ENCODE measurements at regions of chr1 and their contacts with region 1.

Region 1: DNA sequence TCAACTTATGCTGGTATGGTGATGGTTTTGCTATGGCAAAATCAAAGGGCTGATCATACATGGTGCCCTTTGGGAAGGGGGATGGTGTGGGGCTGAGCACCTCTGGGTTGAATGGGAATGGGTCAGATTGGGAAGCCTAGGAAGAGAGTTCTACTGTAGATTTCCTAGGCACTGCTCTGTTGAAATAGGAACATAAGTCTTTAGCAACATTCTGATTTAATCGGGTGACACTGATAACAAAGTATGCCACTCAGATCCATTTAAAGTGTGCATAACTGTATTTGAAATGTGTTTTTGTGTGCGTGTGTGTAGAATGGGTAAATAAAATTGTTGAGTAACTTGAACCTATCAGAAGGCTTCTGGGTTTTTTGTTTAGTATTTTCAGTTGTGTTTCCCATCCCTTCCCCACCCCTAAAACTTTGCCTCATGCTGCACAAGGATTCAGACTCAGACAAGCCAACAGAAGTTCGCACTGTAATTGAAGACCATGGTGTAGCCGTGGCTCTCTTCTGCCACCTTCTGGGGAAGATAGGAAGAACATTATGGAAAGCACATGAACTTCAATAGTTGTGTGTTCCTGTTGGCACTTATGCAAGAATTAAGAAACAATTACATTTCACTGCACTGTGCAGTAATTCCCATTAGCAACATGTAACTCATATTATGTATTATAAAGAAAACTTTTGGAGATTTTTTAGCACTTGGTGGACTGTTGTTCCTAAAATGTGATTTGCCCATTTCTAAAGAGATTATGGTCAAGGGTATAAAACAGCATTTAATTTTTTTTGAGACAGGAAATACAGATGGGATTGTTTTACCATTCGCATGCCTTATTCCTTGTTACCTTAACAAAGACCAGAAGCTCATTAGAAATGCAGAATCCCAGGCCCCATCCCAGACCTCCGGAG is 10.9 kb upstream of the C4BPB start:
- DNase-seq: peak; percentile 34 to 84 (median 59)
- ATAC-seq: peak; percentile 99
- H3K4me3 ChIP-seq: no peak overlapping the region
- H3K4me3 Mint-ChIP-seq: no peak overlapping the region
- H3K27ac ChIP-seq: no peak overlapping the region
- H3K27ac Mint-ChIP-seq: no peak overlapping the region
- H3K4me1 ChIP-seq: no peaks in the 10 kb centered on the region
- H3K4me1 Mint-ChIP-seq: peaks cover 4% of the 10 kb centered on the region
- H3K27me3 ChIP-seq: no peaks in the 10 kb centered on the region
- H3K27me3 Mint-ChIP-seq: peaks cover 6% of the 10 kb centered on the region
- CTCF ChIP-seq: peak; percentile 94

Region 2: DNA sequence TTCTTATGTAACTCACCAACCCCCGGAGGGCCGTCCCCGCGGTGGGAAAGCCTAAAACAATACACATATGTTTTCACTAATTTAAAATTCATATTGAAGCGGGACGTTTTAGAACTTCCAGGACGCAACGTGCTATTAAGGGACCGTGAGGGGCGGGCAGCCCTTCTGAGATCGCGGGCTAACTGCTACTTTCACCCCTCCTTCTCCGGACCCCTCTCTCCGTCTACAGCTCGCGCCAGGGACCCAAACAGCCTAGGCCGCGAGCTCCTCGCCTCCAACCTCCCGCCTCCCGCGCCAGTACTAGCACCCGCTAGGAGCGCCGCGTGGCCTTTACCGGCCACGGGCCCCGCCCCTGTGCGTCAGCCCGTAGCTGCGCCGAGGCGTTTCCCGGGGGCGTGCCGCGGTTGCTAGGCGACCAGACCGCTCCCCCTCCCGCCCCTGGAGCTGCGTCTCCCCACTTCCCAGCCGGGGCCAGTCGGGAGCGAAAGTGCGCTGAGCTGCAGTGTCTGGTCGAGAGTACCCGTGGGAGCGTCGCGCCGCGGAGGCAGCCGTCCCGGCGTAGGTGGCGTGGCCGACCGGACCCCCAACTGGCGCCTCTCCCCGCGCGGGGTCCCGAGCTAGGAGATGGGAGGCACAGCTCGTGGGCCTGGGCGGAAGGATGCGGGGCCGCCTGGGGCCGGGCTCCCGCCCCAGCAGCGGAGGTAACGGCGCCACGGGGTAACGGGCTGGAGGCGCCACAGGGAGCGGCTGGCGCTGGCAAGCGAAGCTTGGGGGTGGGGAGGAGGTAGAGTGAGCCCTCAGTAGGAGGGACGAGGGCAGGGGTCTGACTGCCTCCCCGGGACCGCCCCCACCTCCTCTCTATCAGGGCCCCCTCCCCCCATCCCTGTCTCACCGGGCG is 442.4 kb before region 1 on chr1 and contains the start of gene DYRK3:
- CTCF ChIA-PET with region 1: no interaction called
- POLR2A ChIA-PET with region 1: no interaction called
- intact Hi-C with region 1: loop called in 1 of 2 experiments (anchors 10 kb)
- DNase-seq: peak; percentile 63 to 94 (median 88)
- ATAC-seq: peak; percentile 94
- H3K4me3 ChIP-seq: peak within 1 kb of the TSS; percentile 58 to 79
- H3K4me3 Mint-ChIP-seq: peak within 1 kb of the TSS; percentile 85
- H3K27ac ChIP-seq: peak within 1 kb of the TSS; percentile 9 to 12
- H3K27ac Mint-ChIP-seq: peak within 1 kb of the TSS; percentile 70
- H3K4me1 ChIP-seq: peaks cover 15% of the 10 kb centered on the region
- H3K4me1 Mint-ChIP-seq: peaks cover 16% of the 10 kb centered on the region
- H3K27me3 ChIP-seq: no peaks in the 10 kb centered on the region
- H3K27me3 Mint-ChIP-seq: peaks cover 15% of the 10 kb centered on the region
- CTCF ChIP-seq: no peak
- total RNA-seq, gene DYRK3: 0.94 to 1.4 TPM

Region 3: GRCh38 chr1:206935491-206936067 is 142.1 kb before region 1 on chr1:
- CTCF ChIA-PET with region 1: no interaction called
- POLR2A ChIA-PET with region 1: no interaction called
- intact Hi-C with region 1: loop called (anchors 5 kb)
- DNase-seq: peak in 6 of 9 experiments; percentile 41 to 65 (median 52)
- ATAC-seq: peak; percentile 45
- H3K4me3 ChIP-seq: no peak overlapping the region
- H3K4me3 Mint-ChIP-seq: no peak overlapping the region
- H3K27ac ChIP-seq: no peak overlapping the region
- H3K27ac Mint-ChIP-seq: no peak overlapping the region
- H3K4me1 ChIP-seq: peaks cover 20% of the 10 kb centered on the region
- H3K4me1 Mint-ChIP-seq: peaks cover 26% of the 10 kb centered on the region
- H3K27me3 ChIP-seq: no peaks in the 10 kb centered on the region
- H3K27me3 Mint-ChIP-seq: no peaks in the 10 kb centered on the region
- CTCF ChIP-seq: peak; percentile 48

Region 4: DNA sequence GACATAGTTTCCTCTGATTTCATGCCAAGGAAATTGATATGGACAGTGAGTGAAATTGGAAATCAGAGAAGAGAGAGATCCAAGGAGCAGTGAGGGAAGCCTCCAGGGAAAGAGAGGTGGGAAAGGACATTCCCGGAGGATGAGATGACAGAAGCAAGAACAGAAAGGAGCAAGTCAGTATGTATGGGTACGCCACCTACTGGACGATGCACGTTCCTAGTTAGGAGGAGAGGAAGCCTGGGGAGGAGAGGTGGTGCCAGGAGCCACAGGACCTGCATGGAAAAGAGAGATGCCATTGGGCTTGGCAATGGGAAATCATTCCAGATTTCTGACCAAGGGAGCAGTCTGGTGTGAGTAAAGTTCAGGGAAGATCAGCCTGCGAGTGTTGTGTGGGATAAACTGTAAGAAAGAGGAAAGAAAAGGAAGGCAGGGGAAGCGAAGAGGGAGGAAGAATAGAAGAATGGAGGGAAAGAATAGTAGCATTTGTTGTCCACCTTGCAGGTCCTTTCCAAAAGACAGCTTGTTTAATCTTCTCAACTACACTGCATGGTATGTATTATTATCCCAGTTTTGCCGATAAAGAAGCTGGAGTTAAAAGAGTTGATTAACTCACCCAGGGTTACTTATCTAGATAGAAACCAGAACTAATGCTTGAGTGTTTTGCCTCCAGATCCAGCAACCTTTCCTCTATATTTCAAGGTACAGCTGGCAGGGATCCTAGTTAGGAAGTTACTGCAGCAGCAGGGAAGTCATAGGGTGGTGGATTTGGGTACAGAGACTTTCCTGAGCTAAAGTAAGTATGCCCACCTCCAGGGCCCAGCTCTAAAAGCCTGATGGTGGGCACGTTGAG is 72.5 kb before region 1 on chr1:
- CTCF ChIA-PET with region 1: interaction called, 4 read pairs
- POLR2A ChIA-PET with region 1: no interaction called
- intact Hi-C with region 1: loop called in 1 of 2 experiments (anchors 1 kb)
- DNase-seq: peak in 7 of 9 experiments; percentile 9 to 58 (median 41)
- ATAC-seq: peak; percentile 51
- H3K4me3 ChIP-seq: no peak overlapping the region
- H3K4me3 Mint-ChIP-seq: no peak overlapping the region
- H3K27ac ChIP-seq: no peak overlapping the region
- H3K27ac Mint-ChIP-seq: no peak overlapping the region
- H3K4me1 ChIP-seq: no peaks in the 10 kb centered on the region
- H3K4me1 Mint-ChIP-seq: peaks cover 2% of the 10 kb centered on the region
- H3K27me3 ChIP-seq: no peaks in the 10 kb centered on the region
- H3K27me3 Mint-ChIP-seq: peaks cover 3% of the 10 kb centered on the region
- CTCF ChIP-seq: peak; percentile 63

Region 5: DNA sequence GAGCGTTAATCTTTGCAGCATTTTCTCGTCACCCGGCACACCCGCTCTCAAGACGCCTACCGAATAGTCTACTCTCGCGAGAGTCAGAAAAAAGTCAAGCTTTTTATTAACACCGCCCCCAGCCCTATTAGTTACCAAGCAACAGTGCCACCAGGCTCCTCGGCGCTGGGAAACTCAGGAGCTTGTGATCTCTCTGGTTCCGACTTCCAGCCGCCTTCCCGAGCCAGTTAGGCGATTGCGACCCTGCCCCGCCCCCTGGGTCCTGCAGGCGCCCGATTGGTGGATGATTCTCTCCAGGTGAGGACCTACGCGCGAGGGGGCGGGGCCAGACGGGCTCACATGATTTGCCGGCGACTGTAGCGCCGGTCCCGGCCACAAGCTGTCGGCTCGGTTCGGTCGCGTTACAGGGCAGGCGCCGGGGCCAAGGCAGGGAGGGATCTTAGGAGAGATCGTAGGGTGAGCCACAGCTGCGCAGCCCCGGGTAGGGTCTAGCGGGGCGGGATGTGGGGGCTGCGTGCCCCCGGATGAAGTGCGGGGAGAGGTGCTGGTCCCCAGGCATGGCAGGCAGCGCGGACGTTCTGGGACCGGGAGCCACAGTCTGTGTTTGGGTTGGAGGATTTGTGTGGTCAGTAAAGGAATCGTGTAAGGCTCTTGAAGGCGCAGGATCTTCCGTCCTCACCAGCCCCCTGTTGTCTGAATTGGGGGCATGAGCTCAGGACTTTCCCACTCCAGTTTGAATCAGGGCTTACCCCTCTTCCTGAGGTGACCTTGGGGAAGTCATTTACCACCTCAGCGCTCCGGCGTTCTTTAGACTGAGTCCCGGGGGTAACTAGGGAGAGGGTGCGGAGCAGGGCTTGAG is 24.6 kb before region 1 on chr1 and contains the start of gene PFKFB2:
- CTCF ChIA-PET with region 1: interaction called, 90 read pairs
- POLR2A ChIA-PET with region 1: no interaction called
- intact Hi-C with region 1: loop called (anchors 1 kb)
- DNase-seq: peak; percentile 88 to 97 (median 95)
- ATAC-seq: peak; percentile 87
- H3K4me3 ChIP-seq: peak within 1 kb of the TSS; percentile 70 to 82
- H3K4me3 Mint-ChIP-seq: peak within 1 kb of the TSS; percentile 97
- H3K27ac ChIP-seq: peak within 1 kb of the TSS; percentile 70 to 83
- H3K27ac Mint-ChIP-seq: peak within 1 kb of the TSS; percentile 98
- H3K4me1 ChIP-seq: peaks cover 28% of the 10 kb centered on the region
- H3K4me1 Mint-ChIP-seq: peaks cover 44% of the 10 kb centered on the region
- H3K27me3 ChIP-seq: no peaks in the 10 kb centered on the region
- H3K27me3 Mint-ChIP-seq: no peaks in the 10 kb centered on the region
- CTCF ChIP-seq: peak; percentile 21
- total RNA-seq, gene PFKFB2: 8.1 to 8.5 TPM

Region 6: DNA sequence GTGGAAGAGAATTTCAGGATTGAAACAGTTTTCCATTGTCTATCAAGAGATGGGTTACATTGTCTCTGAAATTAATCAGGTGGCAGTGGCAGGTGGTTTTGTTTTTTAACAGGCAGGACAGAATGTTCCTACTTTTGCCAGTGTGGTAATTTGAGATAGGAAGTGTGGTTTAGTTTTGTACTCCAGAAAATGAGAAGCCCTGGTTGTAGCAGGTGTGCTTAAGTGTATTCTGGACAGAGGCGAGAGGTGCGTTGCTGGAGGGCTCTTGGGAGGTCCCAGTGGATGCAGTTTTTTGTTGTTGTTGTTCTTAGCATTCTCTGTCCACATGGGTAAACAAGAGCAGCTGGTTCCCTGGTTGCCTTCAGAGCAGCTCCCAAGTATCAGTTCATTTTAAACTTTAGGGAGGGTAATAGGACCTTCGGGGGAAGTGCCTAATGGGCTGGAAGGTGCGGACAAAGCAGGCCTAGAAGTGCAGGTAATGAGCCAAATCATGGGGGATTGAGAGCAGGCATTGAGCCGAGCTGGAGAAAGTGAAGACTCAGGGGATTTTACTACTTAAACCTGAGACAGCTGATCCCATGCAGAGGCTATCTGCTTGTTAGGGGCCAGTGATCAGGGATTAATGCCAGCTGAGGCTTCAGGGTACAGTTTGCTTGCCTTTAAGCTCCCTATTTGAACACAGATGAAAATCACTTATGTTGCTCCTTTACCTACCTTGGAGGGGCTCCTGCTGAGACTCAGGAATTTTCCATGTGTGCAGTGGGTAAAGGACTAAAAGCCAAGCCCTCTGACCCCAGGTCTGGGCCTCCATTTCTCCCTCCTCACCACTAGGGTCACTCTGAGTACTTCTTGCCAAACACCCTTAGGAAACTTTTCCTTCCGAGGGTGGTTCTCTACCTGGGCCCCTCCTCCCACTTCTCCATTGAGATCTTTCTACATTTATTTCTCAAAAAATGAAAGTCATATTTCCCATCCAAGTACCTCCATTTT is 18.6 kb before region 1 on chr1:
- CTCF ChIA-PET with region 1: interaction called, 10 read pairs
- POLR2A ChIA-PET with region 1: no interaction called
- intact Hi-C with region 1: no loop called
- DNase-seq: no peak
- ATAC-seq: no peak
- H3K4me3 ChIP-seq: no peak overlapping the region
- H3K4me3 Mint-ChIP-seq: no peak overlapping the region
- H3K27ac ChIP-seq: no peak overlapping the region
- H3K27ac Mint-ChIP-seq: no peak overlapping the region
- H3K4me1 ChIP-seq: no peaks in the 10 kb centered on the region
- H3K4me1 Mint-ChIP-seq: peaks cover 2% of the 10 kb centered on the region
- H3K27me3 ChIP-seq: no peaks in the 10 kb centered on the region
- H3K27me3 Mint-ChIP-seq: no peaks in the 10 kb centered on the region
- CTCF ChIP-seq: no peak

Region 7: GRCh38 chr1:207404849-207405525 is 327.3 kb after region 1 on chr1:
- CTCF ChIA-PET with region 1: interaction called, 115 read pairs
- POLR2A ChIA-PET with region 1: no interaction called
- intact Hi-C with region 1: no loop called
- DNase-seq: peak in 2 of 9 experiments; percentile 68 to 79
- ATAC-seq: peak; percentile 71
- H3K4me3 ChIP-seq: no peak overlapping the region
- H3K4me3 Mint-ChIP-seq: no peak overlapping the region
- H3K27ac ChIP-seq: no peak overlapping the region
- H3K27ac Mint-ChIP-seq: no peak overlapping the region
- H3K4me1 ChIP-seq: no peaks in the 10 kb centered on the region
- H3K4me1 Mint-ChIP-seq: peaks cover 3% of the 10 kb centered on the region
- H3K27me3 ChIP-seq: no peaks in the 10 kb centered on the region
- H3K27me3 Mint-ChIP-seq: peaks cover 5% of the 10 kb centered on the region
- CTCF ChIP-seq: peak; percentile 91

Measured in CD8-positive, alpha-beta T cell (primary cell).